HAP-1 (cell line): ENCODE measurements at regions of chr19 and their contacts with region 1.

Region 1: GRCh38 chr19:18251587-18252369 is 22.5 kb downstream of the IQCN start:
- DNase-seq: peak; percentile 66 to 88
- H3K4me3 ChIP-seq: no peak overlapping the region
- H3K4me1 ChIP-seq: no peaks in the 10 kb centered on the region
- H3K27me3 ChIP-seq: peaks cover 3% of the 10 kb centered on the region; the same call in 1 of the 2 replicates

Region 2: DNA sequence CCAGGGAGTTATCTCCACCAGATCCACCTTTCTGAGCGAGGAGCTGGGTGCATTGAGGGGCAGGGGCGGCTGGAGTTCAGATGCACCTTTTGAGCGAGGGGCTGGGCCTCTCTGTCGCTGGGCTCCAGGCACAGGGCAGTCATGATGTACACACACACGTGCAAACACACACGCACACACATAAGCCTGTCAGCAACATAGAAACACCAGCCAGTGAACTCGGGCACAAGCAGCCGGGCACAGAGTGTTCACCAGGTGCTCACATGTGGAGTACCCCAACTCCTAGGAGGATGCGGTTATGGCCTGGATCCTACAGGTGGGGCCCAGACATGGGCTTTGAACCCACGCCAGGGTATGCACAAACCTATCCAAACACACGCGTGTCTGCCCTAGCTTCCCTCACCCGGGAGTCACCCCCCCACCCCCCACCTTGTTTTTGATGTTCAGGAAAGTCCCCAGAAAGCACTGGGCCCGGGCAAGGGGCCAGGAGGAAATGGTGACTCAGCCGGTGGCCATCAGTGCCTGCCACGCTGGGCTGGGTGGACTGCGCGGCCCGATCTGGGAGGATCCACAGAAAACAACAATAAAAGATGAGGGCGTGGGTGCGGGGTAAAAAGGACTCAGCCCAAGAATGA is 230.5 kb before region 1 on chr19:
- in situ Hi-C with region 1: loop called (anchors 10 kb)
- DNase-seq: no peak
- H3K4me3 ChIP-seq: no peak overlapping the region
- H3K4me1 ChIP-seq: peaks cover 17% of the 10 kb centered on the region
- H3K27me3 ChIP-seq: no peaks in the 10 kb centered on the region

Region 3: GRCh38 chr19:18152444-18152816 is 99.3 kb before region 1 on chr19:
- in situ Hi-C with region 1: no loop called
- DNase-seq: peak; percentile 95 to 100
- H3K4me3 ChIP-seq: peak overlapping the region; percentile 70
- H3K4me1 ChIP-seq: peaks cover 15% of the 10 kb centered on the region
- H3K27me3 ChIP-seq: no peaks in the 10 kb centered on the region